ENCODE measurements at regions of chr20 and their contacts with region 1.

Region 1: DNA sequence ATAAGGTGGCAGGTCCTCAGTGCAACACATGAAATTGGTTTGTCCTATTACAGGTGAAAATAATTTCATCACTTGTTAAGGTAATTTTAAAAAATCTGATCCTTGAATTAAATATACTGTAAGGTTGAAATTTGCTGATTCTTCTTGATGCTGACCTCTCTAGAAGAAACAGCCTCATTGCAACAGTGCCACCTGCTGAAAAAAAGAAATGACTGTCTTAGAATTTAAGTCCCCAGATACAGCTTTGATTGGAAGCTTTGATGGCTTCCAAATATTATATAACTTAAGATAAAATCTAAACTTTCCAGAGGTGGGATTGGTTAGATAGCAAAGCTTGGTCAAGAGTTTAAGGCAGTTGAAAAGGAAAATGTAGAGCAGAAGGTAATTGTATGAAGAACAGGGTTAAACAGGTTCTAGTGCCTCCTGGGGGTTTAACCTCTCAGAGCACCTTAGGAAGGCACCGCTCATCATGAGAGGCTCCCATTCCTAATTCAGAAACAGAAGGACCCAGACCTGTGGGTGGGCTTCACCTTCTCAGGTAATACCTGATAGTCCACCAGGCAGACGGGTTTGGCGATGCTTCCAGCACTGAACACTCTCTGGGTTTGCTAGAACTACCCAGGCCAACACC is 401.0 kb downstream of the PAX1 start:
- DNase-seq: no peak
- H3K4me3 Mint-ChIP-seq: no peak overlapping the region
- H3K27ac Mint-ChIP-seq: no peak overlapping the region
- H3K4me1 Mint-ChIP-seq: no peaks in the 10 kb centered on the region
- H3K27me3 Mint-ChIP-seq: no peaks in the 10 kb centered on the region
- CTCF ChIP-seq: no peak

Region 2: DNA sequence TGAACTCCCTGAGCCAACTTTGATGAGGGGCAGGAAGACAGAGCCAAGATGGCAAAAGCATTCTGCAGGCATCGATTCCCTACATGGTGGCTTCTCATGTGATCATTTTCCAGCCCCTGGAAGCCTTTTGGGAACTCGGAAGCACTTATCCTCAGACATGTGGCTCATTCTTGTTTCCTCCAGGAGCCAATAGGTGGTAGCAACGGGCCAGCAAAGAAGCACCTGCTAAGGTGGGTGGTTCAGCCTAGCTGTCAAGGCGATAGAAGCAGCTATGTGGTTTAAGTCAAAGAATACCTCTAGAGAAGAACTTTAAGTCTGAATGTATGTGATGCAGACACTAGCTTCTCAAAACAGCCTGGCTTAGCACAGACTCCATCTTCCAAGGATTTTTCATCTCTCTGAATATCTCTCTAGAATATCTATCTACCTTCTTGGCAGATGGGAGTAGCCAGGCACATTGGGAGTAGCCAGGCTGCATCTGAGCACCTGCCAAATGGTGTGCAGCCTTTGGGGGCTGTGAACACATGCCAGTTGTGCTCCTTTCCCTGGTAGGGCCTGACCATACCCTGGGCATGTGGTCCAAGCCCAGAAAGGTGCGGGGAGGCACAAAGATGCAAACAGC is 465.8 kb before region 1 on chr20:
- CTCF ChIA-PET with region 1: no interaction called
- intact Hi-C with region 1: loop called (anchors 10 kb)
- DNase-seq: no peak
- H3K4me3 Mint-ChIP-seq: no peak overlapping the region
- H3K27ac Mint-ChIP-seq: no peak overlapping the region
- H3K4me1 Mint-ChIP-seq: no peaks in the 10 kb centered on the region
- H3K27me3 Mint-ChIP-seq: no peaks in the 10 kb centered on the region
- CTCF ChIP-seq: no peak

Measured in Calu3 (cell line).